Mucosa of descending colon (tissue), 3 donors: ENCODE measurements at regions of chr16 and their contacts with region 1.

Region 1: DNA sequence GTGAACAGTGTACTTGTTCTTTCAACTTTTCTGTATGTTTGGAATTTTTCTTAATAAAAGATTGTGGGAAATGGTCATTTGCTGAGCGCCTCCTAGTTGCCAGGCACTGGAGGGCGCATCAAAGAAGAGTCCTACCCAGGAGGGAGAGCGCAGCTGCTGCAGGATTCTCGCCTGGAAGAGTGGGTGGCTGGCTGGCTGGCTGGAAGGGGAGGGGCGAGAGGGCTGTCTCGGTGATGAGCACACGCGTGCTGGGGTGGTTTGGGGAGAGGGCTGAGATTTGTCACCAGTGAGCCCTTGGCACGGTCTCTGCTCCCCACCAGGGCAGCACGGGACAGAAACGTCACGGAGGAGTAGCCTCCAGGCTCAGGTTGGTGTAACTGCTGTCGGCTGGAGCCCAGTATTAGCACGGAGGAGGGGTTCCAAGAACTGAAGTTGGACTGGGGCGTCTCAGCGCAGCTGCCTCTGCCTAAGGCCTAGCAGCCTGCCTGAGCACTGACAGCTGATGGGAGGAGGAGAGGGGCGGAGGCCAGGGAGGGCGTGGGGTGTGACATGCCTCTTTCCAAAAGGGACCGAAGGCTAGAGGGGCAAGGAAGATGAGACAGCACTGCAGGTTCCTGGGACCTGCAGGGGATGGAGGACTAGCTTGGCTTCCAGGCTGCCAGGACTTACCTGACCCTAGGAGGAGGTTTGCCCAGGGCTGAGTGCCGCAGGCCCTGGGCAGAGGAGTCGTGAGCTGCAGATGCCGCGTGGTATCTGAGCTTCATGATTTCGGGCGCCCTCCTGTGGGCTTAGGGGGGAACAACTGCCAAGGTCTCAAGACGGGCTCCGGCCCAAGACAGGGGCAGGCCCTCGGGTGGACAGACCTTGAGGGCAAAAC is 5.7 kb downstream of the LDHD start:
- DNase-seq: peak; percentile 90 to 93 (median 91)
- ATAC-seq: peak; percentile 83
- H3K4me3 ChIP-seq: no peak overlapping the region
- H3K4me1 ChIP-seq: peaks cover 36% of the 10 kb centered on the region
- CTCF ChIP-seq: peak; percentile 88

Region 2: GRCh38 chr16:74998481-74999218 is 112.2 kb before region 1 on chr16 and contains the start of gene ZNRF1:
- intact Hi-C with region 1: loop called (anchors 2 kb)
- DNase-seq: peak; percentile 87 to 91 (median 88)
- ATAC-seq: peak; percentile 90
- H3K4me3 ChIP-seq: peak within 1 kb of the TSS; percentile 55
- H3K4me1 ChIP-seq: peaks cover 11% of the 10 kb centered on the region
- CTCF ChIP-seq: peak; percentile 49
- total RNA-seq, gene ZNRF1: 29.9 to 42.7 (median 39.3) TPM

Region 3: GRCh38 chr16:75064403-75065148 is 46.3 kb before region 1 on chr16:
- intact Hi-C with region 1: no loop called
- DNase-seq: peak; percentile 74 to 78 (median 77)
- ATAC-seq: peak; percentile 85
- H3K4me3 ChIP-seq: no peak overlapping the region
- H3K4me1 ChIP-seq: peaks cover 22% of the 10 kb centered on the region
- CTCF ChIP-seq: no peak